ENCODE measurements at regions of chr11 and their contacts with region 1.

Region 1: GRCh38 chr11:118401151-118401878 is at the start of gene ATP5MG:
- DNase-seq: peak; percentile 95
- ATAC-seq: peak; percentile 85 to 88
- total RNA-seq, gene ATP5MG: 567 to 582 TPM

Region 2: DNA sequence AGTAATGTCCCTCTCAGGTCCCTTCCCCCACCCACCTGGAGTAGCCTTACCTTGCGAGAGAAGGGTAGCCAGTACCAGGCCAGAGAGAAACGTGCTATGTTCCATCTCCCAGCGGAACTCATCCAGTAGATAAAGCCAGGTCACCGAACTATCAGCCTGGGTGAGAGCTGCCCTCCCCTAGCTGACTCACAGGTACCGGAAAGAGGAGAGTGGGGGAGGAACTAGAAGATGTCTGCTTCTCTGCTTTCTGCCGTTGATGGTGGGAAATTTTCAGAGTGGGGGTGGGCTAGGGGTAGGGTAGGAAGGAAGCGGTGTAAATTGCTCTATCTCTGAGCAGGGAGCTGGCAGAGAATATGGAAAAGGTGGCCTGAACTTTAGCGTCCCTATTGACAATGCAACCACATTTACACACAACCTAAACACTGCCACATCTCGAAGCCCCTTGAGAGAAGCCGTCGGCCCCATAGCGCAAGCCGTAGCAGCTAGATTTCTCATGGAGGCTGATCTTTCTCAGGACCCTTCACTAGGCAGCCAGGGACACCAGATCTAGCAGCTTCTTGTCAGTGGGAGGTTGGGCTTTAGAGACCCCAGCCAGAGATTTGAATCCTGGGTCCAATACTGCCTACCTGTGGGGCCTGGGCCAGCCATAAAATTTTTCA is 58.7 kb before region 1 on chr11 and contains the start of gene CD3D:
- intact Hi-C with region 1: no loop called
- DNase-seq: no peak
- ATAC-seq: peak in 1 of 2 donors; percentile 47
- total RNA-seq, gene CD3D: 0.86 to 2.0 TPM

Region 3: DNA sequence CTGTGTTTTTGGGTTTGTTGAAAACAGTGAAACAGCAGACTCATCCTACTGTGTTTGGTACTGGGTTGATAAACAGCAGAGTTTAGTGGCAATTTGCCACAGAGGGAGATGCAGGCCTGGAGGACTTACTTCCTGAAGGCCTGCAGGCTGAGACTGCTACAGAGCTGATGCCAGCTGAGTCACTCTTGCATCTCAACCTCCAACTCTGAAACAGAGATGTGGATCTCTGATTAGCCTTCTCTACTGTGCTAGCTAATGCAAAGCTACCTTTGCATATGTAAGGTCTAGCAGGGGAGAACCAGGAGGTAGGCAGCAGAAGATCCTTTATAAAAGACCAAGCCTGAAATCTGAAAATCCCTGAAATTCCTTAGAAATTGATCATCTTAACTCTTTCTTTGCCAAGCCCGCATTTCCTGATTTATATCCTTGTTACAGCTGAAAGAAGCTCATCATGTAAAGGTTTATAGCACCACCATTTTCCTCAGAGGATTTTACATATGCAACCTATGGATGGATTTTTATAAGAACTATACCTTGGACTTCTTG is 14.5 kb after region 1 on chr11:
- intact Hi-C with region 1: no loop called
- DNase-seq: no peak
- ATAC-seq: peak; percentile 72 to 89

Region 4: DNA sequence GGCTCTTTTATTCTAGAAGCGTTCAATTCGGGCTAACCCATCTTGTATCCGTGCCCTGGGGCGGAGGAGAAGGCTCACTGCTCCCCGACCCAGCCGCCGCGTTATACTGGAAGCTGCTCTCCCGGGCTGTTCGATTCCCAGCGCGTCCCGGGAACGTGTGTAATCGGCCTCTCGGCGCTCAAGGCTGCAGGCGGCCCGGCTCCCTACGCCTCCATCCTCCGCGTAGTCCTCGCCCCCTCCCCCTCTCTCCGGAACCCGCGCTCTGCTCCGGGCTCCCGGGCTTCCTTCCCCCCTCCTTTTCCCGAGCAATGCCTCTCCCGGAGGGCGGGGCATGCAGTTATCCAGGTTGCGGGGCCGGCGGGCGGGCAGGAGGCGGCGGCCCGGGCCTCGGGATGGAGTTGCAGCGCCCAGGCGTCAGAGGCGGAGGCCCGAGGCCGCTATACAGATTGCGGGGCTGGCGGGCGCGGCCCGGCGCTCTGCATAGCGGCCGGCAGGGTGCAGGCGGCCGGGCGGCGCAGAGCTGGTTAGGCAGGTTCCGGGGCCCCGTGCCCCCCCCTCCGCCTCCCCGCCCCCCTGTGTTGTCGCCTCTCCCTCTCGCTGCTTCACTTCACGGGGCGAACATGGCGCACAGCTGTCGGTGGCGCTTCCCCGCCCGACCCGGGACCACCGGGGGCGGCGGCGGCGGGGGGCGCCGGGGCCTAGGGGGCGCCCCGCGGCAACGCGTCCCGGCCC is 34.7 kb after region 1 on chr11 and contains the start of gene KMT2A:
- intact Hi-C with region 1: loop called in 1 of 2 experiments (anchors 5 kb)
- DNase-seq: peak; percentile 98
- ATAC-seq: peak; percentile 89 to 90
- total RNA-seq, gene KMT2A: 23.7 to 25.2 TPM

Region 5: GRCh38 chr11:118488480-118489109 is 87.3 kb after region 1 on chr11:
- intact Hi-C with region 1: loop called (anchors 5 kb)
- DNase-seq: peak; percentile 44
- ATAC-seq: peak; percentile 65 to 67

Region 6: DNA sequence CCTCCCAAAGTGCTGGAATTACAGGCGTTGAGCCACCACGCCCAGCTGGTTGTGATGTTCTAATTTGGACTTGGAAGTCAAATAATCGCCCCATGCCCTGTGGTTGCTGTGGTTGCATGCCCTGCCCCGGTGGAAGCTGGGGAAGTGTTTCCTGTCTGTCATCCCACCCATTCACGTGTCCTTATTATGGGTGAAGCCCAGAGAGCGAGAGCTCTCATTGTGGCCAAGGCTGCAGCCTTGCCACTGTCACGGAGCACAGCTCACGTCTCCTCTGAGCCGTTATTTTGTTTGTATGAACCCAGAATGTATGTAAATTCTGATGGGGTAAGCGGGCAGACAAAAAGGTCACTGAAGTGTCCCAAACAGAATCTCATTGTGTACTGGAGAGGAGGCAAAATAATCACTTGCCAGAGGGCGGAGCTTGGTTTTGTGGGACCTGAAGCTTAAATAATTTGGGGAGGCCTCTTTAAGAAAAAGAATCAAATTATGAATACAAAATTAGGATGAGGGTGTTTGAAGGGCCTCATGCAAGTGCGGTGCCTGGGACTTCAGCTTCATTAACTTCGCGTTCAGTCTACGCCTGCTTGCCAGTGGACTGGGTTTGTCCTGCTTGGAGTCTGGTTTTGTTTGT is 303.9 kb after region 1 on chr11:
- intact Hi-C with region 1: no loop called
- DNase-seq: no peak
- ATAC-seq: peak; percentile 27 to 58

Measured in left cardiac atrium (tissue), 4 donors.